B cell (primary cell): ENCODE measurements at regions of chr7 and their contacts with region 1.

Region 1: GRCh38 chr7:99408379-99409191 is at the starts of genes BUD31 and PDAP1:
- DNase-seq: peak; percentile 100
- ATAC-seq: peak; percentile 90
- H3K4me3 ChIP-seq: peak within 1 kb of the TSS; percentile 93 to 99 (median 95)
- H3K4me3 Mint-ChIP-seq: peak within 1 kb of the TSS; percentile 91
- H3K27ac ChIP-seq: peak within 1 kb of the TSS; percentile 89 to 96
- H3K27ac Mint-ChIP-seq: peak within 1 kb of the TSS; percentile 100
- H3K4me1 ChIP-seq: peaks cover 25 to 35% of the 10 kb centered on the region in 2 donors
- H3K4me1 Mint-ChIP-seq: peaks cover 50% of the 10 kb centered on the region
- H3K27me3 ChIP-seq: no peaks in the 10 kb centered on the region
- H3K27me3 Mint-ChIP-seq: no peaks in the 10 kb centered on the region
- CTCF ChIP-seq: no peak
- total RNA-seq, gene BUD31: 53.9 and 57.8 TPM in 2 replicates
- total RNA-seq, gene PDAP1: 60.4 and 61.7 TPM in 2 replicates

Region 2: GRCh38 chr7:99061001-99061776 is 347.4 kb before region 1 on chr7:
- CTCF ChIA-PET with region 1: no interaction called
- POLR2A ChIA-PET with region 1: no interaction called
- intact Hi-C with region 1: no loop called
- DNase-seq: no peak
- ATAC-seq: no peak
- H3K4me3 ChIP-seq: no peak overlapping the region
- H3K4me3 Mint-ChIP-seq: no peak overlapping the region
- H3K27ac ChIP-seq: no peak overlapping the region
- H3K27ac Mint-ChIP-seq: no peak overlapping the region
- H3K4me1 ChIP-seq: no peaks in the 10 kb centered on the region
- H3K4me1 Mint-ChIP-seq: peaks cover 10% of the 10 kb centered on the region
- H3K27me3 ChIP-seq: no peaks in the 10 kb centered on the region
- H3K27me3 Mint-ChIP-seq: no peaks in the 10 kb centered on the region
- CTCF ChIP-seq: no peak

Region 3: DNA sequence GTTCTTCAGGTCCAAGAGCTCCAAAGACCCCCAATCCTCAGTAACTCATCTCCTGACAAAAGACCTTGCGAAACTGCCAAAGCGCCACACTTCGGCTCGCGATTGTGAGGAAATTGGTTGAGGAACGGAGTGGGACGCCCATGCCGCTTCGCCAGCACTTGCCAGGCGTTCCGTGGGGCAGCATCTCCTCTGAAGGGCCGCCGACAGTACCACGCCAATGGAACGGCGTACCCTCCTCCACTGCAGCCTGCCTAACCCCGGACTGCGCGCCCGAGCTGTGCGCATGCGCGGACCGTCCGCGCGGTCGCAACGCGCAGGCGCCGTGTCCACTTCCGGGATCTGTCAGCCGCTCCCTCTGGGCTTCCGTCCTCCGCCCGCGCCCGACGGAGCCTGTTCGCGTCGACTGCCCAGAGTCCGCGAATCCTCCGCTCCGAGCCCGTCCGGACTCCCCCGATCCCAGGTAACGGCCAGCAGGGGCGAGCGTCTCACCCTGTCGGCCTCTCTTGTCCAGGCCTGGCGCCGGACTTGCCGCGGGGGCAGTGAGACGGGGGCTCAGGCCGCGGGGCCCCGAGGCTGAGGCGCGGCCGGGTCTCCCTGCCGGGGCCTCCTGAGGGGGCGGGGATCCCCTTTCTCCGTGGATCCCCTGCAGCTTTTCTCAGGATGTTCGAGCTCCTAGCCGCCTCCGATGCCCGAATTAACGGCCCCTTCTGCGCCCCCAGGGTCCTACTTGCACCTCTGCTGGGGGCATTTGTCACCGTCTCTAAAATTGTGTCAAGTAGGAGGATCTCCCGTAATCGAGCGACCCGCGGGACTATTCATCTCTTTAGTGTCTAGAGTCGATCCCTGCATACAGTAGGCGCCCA is 82.8 kb before region 1 on chr7 and contains the start of gene ARPC1A:
- CTCF ChIA-PET with region 1: no interaction called
- POLR2A ChIA-PET with region 1: interaction called, 3 read pairs
- intact Hi-C with region 1: loop called (anchors 2 kb)
- DNase-seq: peak; percentile 95
- ATAC-seq: peak; percentile 90
- H3K4me3 ChIP-seq: peak within 1 kb of the TSS; percentile 88 to 99 (median 91)
- H3K4me3 Mint-ChIP-seq: peak within 1 kb of the TSS; percentile 85
- H3K27ac ChIP-seq: peak within 1 kb of the TSS; percentile 56 to 80
- H3K27ac Mint-ChIP-seq: peak within 1 kb of the TSS; percentile 92
- H3K4me1 ChIP-seq: peaks cover 22 to 28% of the 10 kb centered on the region in 2 donors
- H3K4me1 Mint-ChIP-seq: peaks cover 36% of the 10 kb centered on the region
- H3K27me3 ChIP-seq: no peaks in the 10 kb centered on the region
- H3K27me3 Mint-ChIP-seq: no peaks in the 10 kb centered on the region
- CTCF ChIP-seq: no peak
- total RNA-seq, gene ARPC1A: 41.7 and 47.8 TPM in 2 replicates

Region 4: GRCh38 chr7:99374103-99375064 is 34.2 kb before region 1 on chr7 and contains the start of gene ARPC1B:
- CTCF ChIA-PET with region 1: interaction called, 8 read pairs
- POLR2A ChIA-PET with region 1: interaction called, 33 read pairs
- intact Hi-C with region 1: loop called (anchors 1 kb)
- DNase-seq: peak; percentile 90
- ATAC-seq: peak; percentile 78
- H3K4me3 ChIP-seq: peak within 1 kb of the TSS; percentile 57 to 91 (median 78)
- H3K4me3 Mint-ChIP-seq: peak within 1 kb of the TSS; percentile 84
- H3K27ac ChIP-seq: peak within 1 kb of the TSS; percentile 56 to 94
- H3K27ac Mint-ChIP-seq: peak within 1 kb of the TSS; percentile 82
- H3K4me1 ChIP-seq: peaks cover 35 to 44% of the 10 kb centered on the region in 2 donors
- H3K4me1 Mint-ChIP-seq: peaks cover 19% of the 10 kb centered on the region
- H3K27me3 ChIP-seq: no peaks in the 10 kb centered on the region
- H3K27me3 Mint-ChIP-seq: no peaks in the 10 kb centered on the region
- CTCF ChIP-seq: no peak
- total RNA-seq, gene ARPC1B: 142 and 164 TPM in 2 replicates

Region 5: GRCh38 chr7:99392677-99393354 is 15.8 kb before region 1 on chr7:
- CTCF ChIA-PET with region 1: interaction called, 20 read pairs
- POLR2A ChIA-PET with region 1: interaction called, 12 read pairs
- intact Hi-C with region 1: loop called (anchors 1 kb)
- DNase-seq: peak; percentile 90
- ATAC-seq: peak; percentile 95
- H3K4me3 ChIP-seq: peak overlapping the region; percentile 16 to 59 (median 50)
- H3K4me3 Mint-ChIP-seq: peak overlapping the region; percentile 94
- H3K27ac ChIP-seq: peak overlapping the region; percentile 43 to 65
- H3K27ac Mint-ChIP-seq: peak overlapping the region; percentile 93
- H3K4me1 ChIP-seq: peaks cover 12 to 20% of the 10 kb centered on the region in 2 donors
- H3K4me1 Mint-ChIP-seq: peaks cover 22% of the 10 kb centered on the region
- H3K27me3 ChIP-seq: no peaks in the 10 kb centered on the region
- H3K27me3 Mint-ChIP-seq: no peaks in the 10 kb centered on the region
- CTCF ChIP-seq: no peak

Region 6: DNA sequence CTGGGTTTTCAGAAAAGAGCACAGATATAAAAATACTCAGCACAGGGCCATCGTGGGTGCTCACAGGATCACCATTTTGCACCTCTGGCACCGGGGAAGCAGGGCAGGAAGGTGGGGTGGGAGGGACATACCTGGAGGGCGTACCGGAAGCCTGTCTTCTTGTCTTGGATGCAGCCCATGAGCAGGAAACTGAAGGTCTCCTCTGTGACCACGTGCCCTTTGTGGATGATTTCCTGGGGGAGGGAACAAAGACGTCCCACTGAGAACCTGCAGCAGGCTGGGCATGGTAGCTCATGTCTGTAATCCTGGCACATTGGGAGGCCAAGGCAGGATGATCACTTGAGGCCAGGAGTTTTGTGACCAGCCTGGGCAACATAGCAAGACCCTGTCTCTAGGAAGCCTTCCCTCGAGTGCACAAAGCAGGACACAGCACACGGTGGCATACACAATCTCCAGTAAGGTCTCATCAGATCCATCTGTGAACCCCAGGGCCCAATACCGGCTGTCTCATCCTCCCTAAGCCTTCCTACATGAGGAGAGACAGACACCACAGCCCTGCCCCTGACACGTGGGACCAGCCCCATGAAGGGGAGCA is 20.5 kb after region 1 on chr7:
- CTCF ChIA-PET with region 1: no interaction called
- POLR2A ChIA-PET with region 1: no interaction called
- intact Hi-C with region 1: no loop called
- DNase-seq: no peak
- ATAC-seq: no peak
- H3K4me3 ChIP-seq: no peak overlapping the region
- H3K4me3 Mint-ChIP-seq: no peak overlapping the region
- H3K27ac ChIP-seq: no peak overlapping the region
- H3K27ac Mint-ChIP-seq: no peak overlapping the region
- H3K4me1 ChIP-seq: no peaks in the 10 kb centered on the region
- H3K4me1 Mint-ChIP-seq: no peaks in the 10 kb centered on the region
- H3K27me3 ChIP-seq: no peaks in the 10 kb centered on the region
- H3K27me3 Mint-ChIP-seq: no peaks in the 10 kb centered on the region
- CTCF ChIP-seq: no peak

Region 7: GRCh38 chr7:99447943-99448342 is 39.4 kb after region 1 on chr7:
- CTCF ChIA-PET with region 1: no interaction called
- POLR2A ChIA-PET with region 1: no interaction called
- intact Hi-C with region 1: no loop called
- DNase-seq: no peak
- ATAC-seq: no peak
- H3K4me3 ChIP-seq: no peak overlapping the region
- H3K4me3 Mint-ChIP-seq: no peak overlapping the region
- H3K27ac ChIP-seq: no peak overlapping the region
- H3K27ac Mint-ChIP-seq: no peak overlapping the region
- H3K4me1 ChIP-seq: peaks cover 0 to 12% of the 10 kb centered on the region in 2 donors
- H3K4me1 Mint-ChIP-seq: peaks cover 13% of the 10 kb centered on the region
- H3K27me3 ChIP-seq: no peaks in the 10 kb centered on the region
- H3K27me3 Mint-ChIP-seq: no peaks in the 10 kb centered on the region
- CTCF ChIP-seq: no peak

Region 8: DNA sequence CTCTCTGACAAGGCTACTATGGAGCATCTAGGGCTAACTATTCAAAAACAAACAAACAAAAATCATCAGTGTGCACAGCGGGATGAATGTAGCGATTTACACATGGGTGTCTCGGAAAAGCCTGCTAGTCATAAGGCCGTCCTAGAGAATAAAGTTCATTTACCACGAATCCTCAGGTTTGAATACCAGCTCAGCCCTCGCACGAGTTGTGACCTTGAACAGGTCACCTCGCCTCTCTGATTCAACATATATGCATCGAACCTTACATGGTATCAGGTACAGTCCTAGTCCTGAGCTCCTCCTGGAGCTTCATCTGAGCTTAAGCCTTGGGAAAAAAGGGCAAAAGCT is 56.8 kb after region 1 on chr7:
- CTCF ChIA-PET with region 1: no interaction called
- POLR2A ChIA-PET with region 1: interaction called, 5 read pairs
- intact Hi-C with region 1: loop called (anchors 1 kb)
- DNase-seq: no peak
- ATAC-seq: no peak
- H3K4me3 ChIP-seq: peak overlapping the region; percentile 80 to 96 (median 83)
- H3K4me3 Mint-ChIP-seq: peak overlapping the region; percentile 99
- H3K27ac ChIP-seq: peak overlapping the region; percentile 50 to 80
- H3K27ac Mint-ChIP-seq: peak overlapping the region; percentile 89
- H3K4me1 ChIP-seq: peaks cover 9 to 23% of the 10 kb centered on the region in 2 donors
- H3K4me1 Mint-ChIP-seq: peaks cover 25% of the 10 kb centered on the region
- H3K27me3 ChIP-seq: no peaks in the 10 kb centered on the region
- H3K27me3 Mint-ChIP-seq: no peaks in the 10 kb centered on the region
- CTCF ChIP-seq: no peak

Region 9: DNA sequence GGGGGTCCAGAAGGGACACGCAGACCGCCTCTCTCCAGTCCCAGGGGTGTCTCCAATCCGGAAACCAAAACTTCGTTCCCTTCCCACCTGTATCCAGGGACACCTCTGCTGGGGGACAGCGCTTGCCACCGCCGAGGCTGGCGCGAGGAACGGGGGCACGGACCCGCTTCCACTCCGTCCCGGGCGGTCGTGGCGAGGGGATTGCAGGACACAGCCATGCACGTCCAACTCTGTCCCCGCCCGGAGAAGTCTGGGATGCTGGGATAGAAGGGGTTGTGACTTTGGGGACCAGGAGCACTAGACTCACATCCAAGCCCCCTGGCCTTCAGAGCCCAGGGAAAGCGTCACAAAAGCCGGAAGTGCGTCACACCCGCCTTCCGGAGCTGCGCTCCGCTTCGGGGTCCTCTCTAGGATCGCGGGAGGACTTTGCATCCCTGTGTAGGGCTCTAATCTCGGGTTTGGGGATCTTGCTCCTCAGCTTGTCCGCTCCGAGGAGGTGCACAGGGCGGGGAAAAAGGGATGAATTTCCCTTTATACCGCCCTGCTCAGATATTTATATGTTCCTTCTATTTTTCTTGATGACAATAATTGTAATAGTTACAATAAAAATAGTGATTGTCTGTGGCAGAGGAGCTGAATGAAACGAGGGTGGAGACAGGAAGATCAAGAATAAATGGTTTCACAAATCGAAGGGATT is 143.3 kb after region 1 on chr7 and contains the start of gene FAM200A:
- CTCF ChIA-PET with region 1: no interaction called
- POLR2A ChIA-PET with region 1: no interaction called
- intact Hi-C with region 1: loop called (anchors 1 kb)
- DNase-seq: peak; percentile 92
- ATAC-seq: peak; percentile 97
- H3K4me3 ChIP-seq: peak within 1 kb of the TSS; percentile 76 to 99 (median 97)
- H3K4me3 Mint-ChIP-seq: peak within 1 kb of the TSS; percentile 88
- H3K27ac ChIP-seq: peak within 1 kb of the TSS; percentile 74 to 95
- H3K27ac Mint-ChIP-seq: peak within 1 kb of the TSS; percentile 86
- H3K4me1 ChIP-seq: peaks cover 17 to 22% of the 10 kb centered on the region in 2 donors
- H3K4me1 Mint-ChIP-seq: peaks cover 33% of the 10 kb centered on the region
- H3K27me3 ChIP-seq: no peaks in the 10 kb centered on the region
- H3K27me3 Mint-ChIP-seq: no peaks in the 10 kb centered on the region
- CTCF ChIP-seq: no peak
- total RNA-seq, gene FAM200A: 11.9 and 12.8 TPM in 2 replicates